HAP-1 (cell line): ENCODE measurements at regions of chr12 and their contacts with region 1.

Region 1: DNA sequence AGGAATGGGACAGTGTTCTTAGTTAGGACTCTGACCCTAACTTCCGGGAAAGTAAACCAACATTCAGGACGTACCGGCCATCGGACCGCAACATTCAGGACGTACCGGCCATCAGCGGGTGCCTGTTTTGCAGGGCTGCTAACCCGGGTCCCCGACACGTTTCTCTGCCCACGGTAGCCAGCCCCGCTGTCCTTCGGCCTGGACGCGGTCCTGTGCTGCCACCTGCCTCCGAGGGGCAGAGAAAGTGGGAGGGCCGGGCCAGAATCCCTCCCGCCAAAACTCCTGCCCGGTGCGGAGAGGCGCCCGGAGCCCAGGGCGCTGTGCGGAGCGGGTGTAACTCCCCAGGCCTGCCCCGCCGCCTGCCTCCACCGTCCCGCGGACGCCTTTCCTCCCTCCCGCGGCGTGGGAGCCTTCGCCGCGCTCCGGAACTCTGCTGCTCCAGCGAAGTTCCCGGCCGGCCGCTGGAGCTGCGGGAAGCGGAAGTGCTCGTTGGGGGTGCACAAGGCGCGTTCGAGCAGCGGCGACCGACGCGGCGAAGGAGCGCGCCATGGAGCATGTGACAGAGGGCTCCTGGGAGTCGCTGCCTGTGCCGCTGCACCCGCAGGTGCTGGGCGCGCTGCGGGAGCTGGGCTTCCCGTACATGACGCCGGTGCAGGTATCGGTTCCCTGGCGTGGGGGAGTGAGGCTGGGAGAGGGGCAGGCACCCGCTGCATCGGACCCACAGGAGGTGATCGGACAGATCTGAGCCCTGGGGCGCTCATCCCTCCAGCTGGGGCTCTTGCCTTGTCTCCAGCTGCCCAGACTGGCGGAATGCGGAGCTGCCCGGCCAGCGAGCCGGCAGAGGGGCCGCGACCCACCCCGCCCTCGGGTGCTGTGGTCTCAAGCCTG is at the start of gene DDX55:
- DNase-seq: peak; percentile 64 to 86
- H3K4me3 ChIP-seq: peak within 1 kb of the TSS; percentile 98
- H3K4me1 ChIP-seq: peaks cover 7% of the 10 kb centered on the region
- H3K27me3 ChIP-seq: no peaks in the 10 kb centered on the region

Region 2: GRCh38 chr12:122500685-122501488 is 1101.0 kb before region 1 on chr12 and contains the start of gene ZCCHC8:
- in situ Hi-C with region 1: loop called (anchors 25 kb)
- DNase-seq: peak; percentile 98 to 99
- H3K4me3 ChIP-seq: peak within 1 kb of the TSS; percentile 86
- H3K4me1 ChIP-seq: peaks cover 10% of the 10 kb centered on the region
- H3K27me3 ChIP-seq: no peaks in the 10 kb centered on the region

Region 3: GRCh38 chr12:122593910-122594309 is 1007.9 kb before region 1 on chr12:
- in situ Hi-C with region 1: loop called (anchors 25 kb)
- DNase-seq: no peak
- H3K4me3 ChIP-seq: no peak overlapping the region
- H3K4me1 ChIP-seq: no peaks in the 10 kb centered on the region
- H3K27me3 ChIP-seq: no peaks in the 10 kb centered on the region

Region 4: DNA sequence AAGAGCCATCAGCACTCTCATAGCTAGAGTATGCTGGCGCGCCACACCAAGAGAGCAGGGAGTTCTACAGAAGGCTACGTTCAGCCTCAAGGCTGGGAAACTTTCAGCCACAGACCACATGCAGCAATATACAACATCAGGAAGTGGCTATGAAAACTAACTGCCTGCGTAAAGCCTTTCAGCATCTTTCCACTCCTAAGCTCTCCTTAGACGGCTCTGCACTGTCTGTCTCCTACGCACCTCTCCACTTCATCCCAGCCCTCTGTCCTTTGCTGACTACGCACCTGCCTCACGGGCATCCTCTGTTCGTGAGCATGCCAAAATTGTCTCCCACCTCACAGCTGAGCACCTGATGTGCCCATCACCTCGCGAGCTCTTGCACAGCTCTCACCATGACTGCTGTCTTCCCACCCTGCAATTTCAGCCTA is 378.6 kb before region 1 on chr12:
- in situ Hi-C with region 1: loop called (anchors 25 kb)
- DNase-seq: no peak
- H3K4me3 ChIP-seq: no peak overlapping the region
- H3K4me1 ChIP-seq: peaks cover 10% of the 10 kb centered on the region
- H3K27me3 ChIP-seq: no peaks in the 10 kb centered on the region

Region 5: GRCh38 chr12:123305136-123305535 is 296.7 kb before region 1 on chr12:
- in situ Hi-C with region 1: loop called (anchors 25 kb)
- DNase-seq: no peak
- H3K4me3 ChIP-seq: no peak overlapping the region
- H3K4me1 ChIP-seq: no peaks in the 10 kb centered on the region
- H3K27me3 ChIP-seq: no peaks in the 10 kb centered on the region

Region 6: DNA sequence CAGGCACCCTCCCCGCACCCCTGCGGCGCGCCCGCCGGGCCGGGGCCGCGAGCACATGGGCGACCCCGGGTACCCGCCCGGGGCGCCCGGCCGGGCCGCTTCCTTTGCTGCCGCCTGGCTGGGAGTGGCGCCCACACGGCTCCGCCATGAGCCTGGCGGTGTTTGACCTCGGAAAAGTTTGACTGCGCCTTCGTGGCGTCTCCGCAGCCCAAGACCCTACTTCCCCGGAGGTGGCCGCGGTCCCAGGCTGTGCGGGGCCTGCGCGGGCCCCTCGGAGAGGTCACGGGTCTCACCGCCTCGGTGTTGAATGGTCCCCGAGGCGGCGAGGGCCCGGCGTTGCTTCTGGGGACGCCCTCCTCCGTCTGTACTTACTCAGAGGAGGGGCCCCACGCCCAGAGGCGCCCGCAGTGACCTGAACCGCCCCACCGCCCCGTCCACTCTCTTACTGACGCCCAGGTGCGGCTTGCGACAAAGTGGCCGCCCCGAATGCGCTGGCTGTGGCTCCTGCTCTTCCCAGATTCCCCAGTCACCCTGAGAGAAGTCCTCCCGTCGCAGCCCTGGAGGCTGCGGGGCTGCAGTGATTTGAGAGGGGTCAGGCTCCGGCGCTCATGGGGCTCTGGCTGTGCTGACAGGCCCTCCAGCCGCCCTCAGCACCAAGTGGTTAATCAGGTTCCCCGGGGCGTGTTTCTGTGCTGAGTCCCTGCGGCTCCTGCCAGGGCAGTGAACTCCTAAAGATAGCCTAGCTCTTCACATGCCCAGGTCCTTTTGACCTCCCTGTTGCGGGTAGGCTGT is 212.1 kb before region 1 on chr12:
- in situ Hi-C with region 1: no loop called
- DNase-seq: peak in 1 of 2 experiments; percentile 51
- H3K4me3 ChIP-seq: peak overlapping the region; percentile 50
- H3K4me1 ChIP-seq: peaks cover 26% of the 10 kb centered on the region
- H3K27me3 ChIP-seq: no peaks in the 10 kb centered on the region